ENCODE measurements at regions of chr22 and their contacts with region 1.

Region 1: DNA sequence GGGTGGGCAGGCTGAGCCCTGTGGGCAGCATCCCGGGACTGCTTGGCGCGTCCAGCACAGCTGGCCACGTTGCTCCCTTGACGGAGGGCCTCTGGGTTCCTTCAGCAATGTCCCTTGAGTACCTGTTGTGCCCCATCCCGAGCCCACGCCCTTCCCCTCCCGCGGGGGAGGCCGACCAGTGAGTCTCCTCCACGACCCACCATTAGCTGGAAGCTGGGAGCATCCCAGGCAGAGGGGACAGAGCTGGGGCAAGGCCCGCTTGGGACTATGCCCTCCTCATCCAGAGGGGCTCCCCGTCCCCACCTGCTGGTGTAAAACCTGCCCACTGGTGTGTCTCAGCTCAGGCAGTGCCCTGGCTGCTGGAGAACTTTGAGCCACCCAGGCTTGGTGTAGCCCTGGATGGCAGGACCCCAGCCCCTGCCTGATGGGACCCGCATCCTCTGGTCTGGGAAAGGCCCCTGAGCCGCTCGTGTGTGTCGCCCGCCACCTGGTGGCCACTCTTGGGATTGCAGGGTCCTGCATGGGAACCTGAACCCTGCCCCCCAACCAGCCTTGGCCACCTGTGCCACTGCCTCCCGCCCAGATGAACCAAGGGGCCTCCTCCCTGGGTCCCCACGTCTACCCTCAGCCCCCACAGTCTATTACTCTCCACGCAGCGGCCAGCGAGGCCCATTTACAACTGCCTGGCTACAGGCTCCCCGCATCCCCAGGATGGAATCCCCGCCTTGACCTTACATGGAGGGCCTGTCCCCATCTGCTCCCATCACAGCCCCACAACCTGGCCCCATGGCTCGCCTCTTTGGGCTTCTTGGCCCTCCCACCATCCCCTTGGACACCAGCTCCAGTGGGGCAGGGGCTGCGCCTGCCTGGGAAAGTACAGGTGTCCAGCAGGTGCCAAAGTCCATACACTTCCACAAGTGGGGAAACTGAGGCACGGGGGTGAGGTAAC is 16.6 kb upstream of the ARHGAP8 start:
- DNase-seq: peak; percentile 35
- ATAC-seq: peak; percentile 80
- H3K4me3 ChIP-seq: no peak overlapping the region
- H3K27ac ChIP-seq: no peak overlapping the region
- H3K4me1 ChIP-seq: no peaks in the 10 kb centered on the region
- H3K27me3 ChIP-seq: no peaks in the 10 kb centered on the region
- CTCF ChIP-seq: peak; percentile 95

Region 2: DNA sequence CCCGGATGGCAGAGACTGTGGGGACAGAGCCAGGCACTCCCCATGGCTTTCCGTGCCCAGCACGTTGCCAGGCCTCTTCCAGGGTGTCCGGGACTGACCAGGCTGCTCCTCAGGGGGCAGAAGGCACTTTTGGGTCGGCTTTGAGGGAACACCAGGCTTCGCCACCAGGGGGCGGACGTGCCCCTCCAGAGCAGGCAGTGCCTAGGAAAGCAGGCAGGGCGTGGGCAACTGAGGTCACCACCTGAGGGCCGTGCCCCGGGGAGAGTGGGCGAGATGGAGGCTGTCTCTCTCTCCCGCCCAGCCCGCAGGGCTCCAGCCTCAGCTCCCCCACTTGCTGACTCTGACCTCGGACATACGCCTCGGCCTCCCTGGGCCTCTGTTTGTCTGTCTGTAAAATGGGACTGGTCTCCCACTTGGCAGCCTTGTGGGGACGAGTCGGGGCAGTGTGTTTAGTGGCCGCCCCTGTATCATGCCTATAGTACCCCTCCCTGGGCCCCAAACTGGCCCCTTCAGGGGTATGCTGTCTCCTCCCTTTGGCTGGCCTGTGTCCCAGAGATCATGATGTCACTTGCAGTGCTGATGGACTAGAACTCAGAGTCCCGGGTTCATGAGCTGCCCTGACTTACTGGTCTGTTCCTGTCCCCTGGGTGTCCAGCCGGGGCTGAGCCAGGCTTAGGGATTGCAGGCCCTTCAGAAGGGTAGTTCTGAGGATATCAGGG is 38.2 kb before region 1 on chr22:
- CTCF ChIA-PET with region 1: no interaction called
- POLR2A ChIA-PET with region 1: no interaction called
- in situ Hi-C with region 1: no loop called
- intact Hi-C with region 1: loop called (anchors 5 kb)
- DNase-seq: peak; percentile 42
- ATAC-seq: peak; percentile 75
- H3K4me3 ChIP-seq: no peak overlapping the region
- H3K27ac ChIP-seq: no peak overlapping the region
- H3K4me1 ChIP-seq: peaks cover 7% of the 10 kb centered on the region; the same call in 1 of the 2 replicates
- H3K27me3 ChIP-seq: no peaks in the 10 kb centered on the region
- CTCF ChIP-seq: peak; percentile 90